ENCODE measurements at regions of chr3 and their contacts with region 1.

Region 1: DNA sequence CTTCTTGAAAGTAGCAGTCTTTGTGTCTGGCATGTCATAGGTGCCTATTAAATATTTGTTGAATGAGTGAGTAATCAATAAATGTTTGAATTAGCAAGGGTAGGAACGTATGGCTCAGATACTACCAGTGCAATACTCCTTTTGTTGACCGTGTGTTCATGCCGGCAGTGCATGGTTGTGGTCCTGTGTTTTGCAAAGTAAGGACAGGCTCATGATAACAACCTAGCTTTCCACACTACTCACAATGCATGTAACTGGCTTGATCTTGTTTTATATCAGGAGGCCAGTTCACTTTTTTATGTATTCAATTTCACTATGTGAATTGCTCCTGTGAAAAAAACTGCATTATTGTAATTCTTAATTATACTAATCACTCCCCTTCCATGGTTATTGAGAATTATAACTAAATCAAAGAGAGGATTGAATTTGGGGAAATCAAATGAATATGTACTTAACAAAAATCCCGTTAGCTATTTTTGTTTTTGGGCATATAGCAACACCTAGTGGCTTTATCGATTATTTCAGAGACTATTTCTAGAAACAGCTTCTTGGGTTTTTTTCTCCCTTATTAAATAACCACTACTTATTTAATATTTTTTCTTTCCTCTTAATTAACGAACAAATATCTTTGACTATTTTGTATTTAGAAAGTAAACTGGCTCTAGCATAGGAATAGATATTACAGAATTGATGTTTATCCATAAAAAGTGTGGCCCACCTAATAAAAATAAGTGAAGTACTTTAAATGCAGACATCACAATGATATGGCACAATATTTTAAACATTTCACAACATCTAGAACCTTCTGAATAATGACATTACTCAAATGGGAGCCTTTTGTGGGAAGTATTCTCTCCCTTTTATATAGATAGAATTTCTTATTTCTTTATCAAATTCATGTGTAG is 218.5 kb downstream of the BBX start:
- DNase-seq: no peak
- ATAC-seq: no peak
- H3K4me3 ChIP-seq: no peak overlapping the region
- H3K27ac ChIP-seq: no peak overlapping the region
- H3K4me1 ChIP-seq: no peaks in the 10 kb centered on the region
- H3K27me3 ChIP-seq: no peaks in the 10 kb centered on the region
- CTCF ChIP-seq: peak in 2 of 3 experiments; percentile 21 to 36; a peak in 3 of 6 replicates
- EP300 ChIP-seq: no peak
- POLR2A ChIP-seq: no peak
- RAD21 ChIP-seq: peak; percentile 67

Region 2: GRCh38 chr3:107429320-107430181 is 311.7 kb before region 1 on chr3:
- CTCF ChIA-PET with region 1: no interaction called
- POLR2A ChIA-PET with region 1: no interaction called
- RAD21 ChIA-PET with region 1: interaction called, 3 read pairs
- SMC1A ChIA-PET with region 1: no interaction called
- in situ Hi-C with region 1: no loop called
- intact Hi-C with region 1: loop called (anchors 5 kb)
- DNase-seq: no peak
- ATAC-seq: peak; percentile 78
- H3K4me3 ChIP-seq: no peak overlapping the region
- H3K27ac ChIP-seq: no peak overlapping the region
- H3K4me1 ChIP-seq: no peaks in the 10 kb centered on the region; the same call in 1 of the 2 replicates
- H3K27me3 ChIP-seq: peaks cover 0 to 3% of the 10 kb centered on the region in 2 experiments; a peak in 3 of 4 replicates
- CTCF ChIP-seq: peak; percentile 70 to 85 (median 78)
- EP300 ChIP-seq: no peak
- POLR2A ChIP-seq: no peak
- RAD21 ChIP-seq: peak; percentile 57

Region 3: DNA sequence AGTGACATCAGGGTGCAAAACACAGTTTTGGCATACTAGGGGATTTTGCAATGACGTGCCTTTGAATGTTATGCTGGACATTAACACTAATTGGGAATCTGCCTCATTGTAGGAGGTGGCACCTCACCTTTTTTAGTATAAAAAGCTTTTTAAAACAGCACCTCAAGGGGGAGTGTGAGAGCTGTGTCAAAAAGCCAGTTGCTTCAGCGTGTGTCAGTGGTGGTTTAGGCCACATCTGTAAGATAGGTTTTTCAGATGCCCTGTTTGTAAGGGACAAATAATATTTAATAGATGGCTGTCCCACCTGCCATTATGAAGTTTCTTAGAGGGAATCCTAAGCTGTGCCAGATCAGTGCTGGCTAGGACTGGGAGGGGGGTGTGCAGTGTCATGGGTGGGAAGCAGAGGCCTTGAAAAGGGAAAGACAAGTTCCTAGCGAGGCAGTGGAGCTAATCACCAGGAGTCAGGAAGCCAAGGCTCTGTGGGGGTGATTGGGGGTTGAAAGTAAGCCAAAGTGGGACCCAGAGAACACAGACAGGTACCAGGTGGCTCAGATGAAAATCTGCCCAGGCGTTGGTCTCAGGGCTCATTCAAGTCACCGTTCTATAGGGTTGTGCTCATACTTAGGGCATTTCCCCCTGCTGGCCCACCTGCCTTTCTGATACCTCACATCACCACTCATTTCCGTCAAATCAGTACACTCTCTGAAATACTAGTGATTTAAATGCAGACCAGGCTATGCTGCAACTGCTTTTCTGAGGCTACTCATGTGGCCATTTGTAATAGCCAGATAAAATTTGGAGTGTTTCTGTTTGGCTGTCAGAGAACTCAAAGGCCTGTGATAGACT is 98.0 kb before region 1 on chr3:
- CTCF ChIA-PET with region 1: interaction called, 37 read pairs
- POLR2A ChIA-PET with region 1: no interaction called
- RAD21 ChIA-PET with region 1: interaction called, 5 read pairs
- SMC1A ChIA-PET with region 1: interaction called, 13 read pairs
- in situ Hi-C with region 1: no loop called
- intact Hi-C with region 1: no loop called
- DNase-seq: no peak
- ATAC-seq: peak; percentile 87
- H3K4me3 ChIP-seq: no peak overlapping the region
- H3K27ac ChIP-seq: no peak overlapping the region
- H3K4me1 ChIP-seq: peaks cover 14% of the 10 kb centered on the region
- H3K27me3 ChIP-seq: no peaks in the 10 kb centered on the region
- CTCF ChIP-seq: peak; percentile 34 to 53 (median 48); a peak in 5 of 6 replicates
- EP300 ChIP-seq: no peak
- POLR2A ChIP-seq: no peak
- RAD21 ChIP-seq: peak; percentile 58

Region 4: DNA sequence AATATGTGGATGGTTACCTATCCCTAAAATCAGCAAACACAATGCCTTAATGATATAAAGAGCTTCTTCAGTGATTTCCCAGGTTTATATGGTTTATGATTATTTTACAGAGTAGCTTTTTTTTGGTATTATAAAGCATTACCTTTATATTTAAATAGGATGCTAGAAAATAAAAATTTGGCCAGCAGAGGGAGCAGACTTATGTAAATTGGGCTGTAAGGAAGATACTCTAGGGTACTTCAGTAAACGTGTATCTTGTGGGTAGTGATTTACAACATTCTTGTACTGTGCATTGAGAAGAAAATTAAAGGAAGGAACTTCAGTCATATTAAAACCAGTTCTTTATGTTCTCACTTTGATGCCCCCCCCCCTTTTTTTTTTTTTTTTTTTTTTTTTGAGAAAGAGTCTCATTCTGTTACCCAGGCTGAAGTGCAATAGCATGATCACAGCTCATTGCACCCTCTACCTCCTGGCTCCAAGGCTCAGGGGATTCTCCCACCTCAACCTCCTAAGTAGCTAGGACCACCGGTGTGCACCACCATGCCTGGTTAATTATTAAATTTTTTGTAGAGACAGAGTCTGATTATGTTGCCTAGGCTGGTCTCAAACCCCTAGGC is 50.6 kb before region 1 on chr3:
- CTCF ChIA-PET with region 1: interaction called, 12 read pairs
- POLR2A ChIA-PET with region 1: no interaction called
- RAD21 ChIA-PET with region 1: interaction called, 5 read pairs
- SMC1A ChIA-PET with region 1: interaction called, 8 read pairs
- in situ Hi-C with region 1: no loop called
- intact Hi-C with region 1: no loop called
- DNase-seq: no peak
- ATAC-seq: peak; percentile 90
- H3K4me3 ChIP-seq: no peak overlapping the region
- H3K27ac ChIP-seq: no peak overlapping the region
- H3K4me1 ChIP-seq: no peaks in the 10 kb centered on the region
- H3K27me3 ChIP-seq: no peaks in the 10 kb centered on the region
- CTCF ChIP-seq: peak; percentile 32 to 50 (median 39); a peak in 4 of 6 replicates
- EP300 ChIP-seq: no peak
- POLR2A ChIP-seq: no peak
- RAD21 ChIP-seq: peak; percentile 33; the same call in 1 of the 2 replicates

Region 5: DNA sequence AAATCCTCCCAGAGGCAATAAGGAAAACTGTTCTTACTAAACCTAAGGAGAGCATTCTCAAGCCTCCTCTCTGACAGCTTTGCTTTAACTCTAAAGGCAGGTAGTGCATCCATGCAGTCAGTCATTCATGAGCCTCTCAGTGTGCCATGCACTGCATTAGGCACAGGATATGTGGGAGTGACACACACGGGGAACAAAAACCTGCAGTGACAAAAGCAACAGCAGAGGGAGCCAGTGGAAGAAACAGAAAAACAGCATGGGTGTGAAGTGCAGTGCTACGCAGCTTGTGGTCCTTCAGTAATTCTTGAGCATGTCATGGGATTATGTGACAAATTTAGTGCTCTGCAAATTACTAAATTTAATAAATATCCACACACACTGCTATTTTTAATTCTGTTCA is 12.2 kb after region 1 on chr3:
- CTCF ChIA-PET with region 1: interaction called, 38 read pairs
- POLR2A ChIA-PET with region 1: no interaction called
- RAD21 ChIA-PET with region 1: no interaction called
- SMC1A ChIA-PET with region 1: interaction called, 6 read pairs
- in situ Hi-C with region 1: no loop called
- intact Hi-C with region 1: no loop called
- DNase-seq: no peak
- ATAC-seq: peak; percentile 70
- H3K4me3 ChIP-seq: no peak overlapping the region
- H3K27ac ChIP-seq: no peak overlapping the region
- H3K4me1 ChIP-seq: no peaks in the 10 kb centered on the region
- H3K27me3 ChIP-seq: no peaks in the 10 kb centered on the region
- CTCF ChIP-seq: peak; percentile 41 to 45 (median 44); a peak in 5 of 6 replicates
- EP300 ChIP-seq: no peak
- POLR2A ChIP-seq: no peak
- RAD21 ChIP-seq: peak; percentile 36; the same call in 1 of the 2 replicates